Natural killer cell (primary cell): ENCODE measurements at regions of chr12 and their contacts with region 1.

Region 1: GRCh38 chr12:88141770-88142609 is at the starts of genes CEP290 and TMTC3:
- DNase-seq: peak; percentile 82 to 98
- ATAC-seq: peak; percentile 95 to 99 (median 96)
- H3K4me3 ChIP-seq: peak within 1 kb of the TSS; percentile 67
- H3K4me3 Mint-ChIP-seq: peak within 1 kb of the TSS; percentile 98
- H3K27ac ChIP-seq: peak within 1 kb of the TSS; percentile 87
- H3K27ac Mint-ChIP-seq: peak within 1 kb of the TSS; percentile 90 to 91
- H3K4me1 ChIP-seq: peaks cover 11% of the 10 kb centered on the region
- H3K4me1 Mint-ChIP-seq: peaks cover 25 to 49% of the 10 kb centered on the region in 2 donors
- H3K27me3 ChIP-seq: no peaks in the 10 kb centered on the region
- H3K27me3 Mint-ChIP-seq: no peaks in the 10 kb centered on the region
- CTCF ChIP-seq: no peak
- total RNA-seq, gene CEP290: 14.3 to 23.6 (median 18.7) TPM
- total RNA-seq, gene TMTC3: 5.0 to 6.2 (median 5.3) TPM

Region 2: DNA sequence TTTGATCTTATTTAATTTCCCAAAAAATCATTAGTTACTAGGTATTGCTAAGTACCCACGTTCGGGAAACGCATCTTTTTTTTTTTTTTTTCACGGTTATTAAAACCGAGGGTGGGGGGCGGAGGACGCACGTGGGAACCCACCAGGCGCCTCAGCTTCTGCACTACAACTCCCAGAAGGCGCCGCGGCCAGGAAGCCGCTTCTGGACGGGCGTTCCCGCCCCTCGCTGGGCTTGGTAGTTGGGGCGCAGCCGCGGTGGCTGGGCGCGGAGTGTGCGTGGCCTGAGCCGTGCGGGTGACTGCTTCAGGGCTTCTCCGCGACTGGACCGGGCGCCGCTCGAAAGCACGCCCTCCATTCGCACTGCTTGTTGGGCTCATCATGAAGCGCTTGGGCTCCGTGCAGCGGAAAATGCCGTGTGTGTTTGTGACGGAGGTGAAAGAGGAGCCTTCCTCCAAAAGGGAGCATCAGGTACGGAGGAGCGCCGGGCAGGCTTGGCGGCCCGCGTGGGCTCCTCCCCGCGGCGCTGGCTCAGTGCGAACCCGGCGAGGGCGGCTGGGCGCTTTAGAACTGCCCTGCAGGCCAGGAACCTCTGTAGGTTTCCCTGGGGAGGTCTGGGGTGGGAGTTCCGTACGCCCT is 106.6 kb before region 1 on chr12:
- intact Hi-C with region 1: loop called (anchors 1 kb)
- DNase-seq: peak; percentile 76 to 90
- ATAC-seq: peak; percentile 98 to 99 (median 98)
- H3K4me3 ChIP-seq: peak overlapping the region; percentile 71
- H3K4me3 Mint-ChIP-seq: peak overlapping the region; percentile 97
- H3K27ac ChIP-seq: peak overlapping the region; percentile 50
- H3K27ac Mint-ChIP-seq: peak overlapping the region; percentile 86 to 93
- H3K4me1 ChIP-seq: no peaks in the 10 kb centered on the region
- H3K4me1 Mint-ChIP-seq: peaks cover 32 to 50% of the 10 kb centered on the region in 2 donors
- H3K27me3 ChIP-seq: no peaks in the 10 kb centered on the region
- H3K27me3 Mint-ChIP-seq: no peaks in the 10 kb centered on the region
- CTCF ChIP-seq: no peak

Region 3: DNA sequence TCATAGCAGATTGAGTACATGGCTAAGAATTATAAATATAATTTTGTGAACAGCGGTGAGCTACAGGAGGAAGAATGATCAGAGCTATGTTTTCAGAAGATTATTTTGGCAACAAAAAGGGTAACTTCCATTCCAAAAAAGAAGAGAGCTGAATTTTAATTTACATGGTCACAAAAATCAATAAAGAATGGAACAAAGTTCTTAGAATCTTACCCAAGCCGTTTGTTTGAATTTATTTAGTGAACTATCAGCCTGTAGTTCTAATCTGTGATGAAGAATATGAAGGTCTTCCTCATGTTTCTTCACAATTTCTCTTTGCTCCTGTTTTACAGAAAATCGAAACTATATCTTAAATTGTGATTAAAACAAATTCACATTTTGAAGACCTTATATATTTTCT is 58.4 kb before region 1 on chr12:
- intact Hi-C with region 1: no loop called
- DNase-seq: no peak
- ATAC-seq: no peak
- H3K4me3 ChIP-seq: no peak overlapping the region
- H3K4me3 Mint-ChIP-seq: no peak overlapping the region
- H3K27ac ChIP-seq: no peak overlapping the region
- H3K27ac Mint-ChIP-seq: no peak overlapping the region
- H3K4me1 ChIP-seq: no peaks in the 10 kb centered on the region
- H3K4me1 Mint-ChIP-seq: no peaks in the 10 kb centered on the region
- H3K27me3 ChIP-seq: no peaks in the 10 kb centered on the region
- H3K27me3 Mint-ChIP-seq: no peaks in the 10 kb centered on the region
- CTCF ChIP-seq: no peak

Region 4: GRCh38 chr12:88111074-88111652 is 30.8 kb before region 1 on chr12:
- intact Hi-C with region 1: no loop called
- DNase-seq: peak in 1 of 2 donors; percentile 56
- ATAC-seq: no peak
- H3K4me3 ChIP-seq: no peak overlapping the region
- H3K4me3 Mint-ChIP-seq: no peak overlapping the region
- H3K27ac ChIP-seq: no peak overlapping the region
- H3K27ac Mint-ChIP-seq: no peak overlapping the region
- H3K4me1 ChIP-seq: no peaks in the 10 kb centered on the region
- H3K4me1 Mint-ChIP-seq: no peaks in the 10 kb centered on the region
- H3K27me3 ChIP-seq: no peaks in the 10 kb centered on the region
- H3K27me3 Mint-ChIP-seq: no peaks in the 10 kb centered on the region
- CTCF ChIP-seq: no peak

Region 5: GRCh38 chr12:89524541-89525285 is 1382.7 kb after region 1 on chr12 and contains the start of gene GALNT4:
- intact Hi-C with region 1: loop called (anchors 5 kb)
- DNase-seq: peak; percentile 65 to 87
- ATAC-seq: peak; percentile 64 to 81 (median 75)
- H3K4me3 ChIP-seq: peak within 1 kb of the TSS; percentile 100
- H3K4me3 Mint-ChIP-seq: peak within 1 kb of the TSS; percentile 96
- H3K27ac ChIP-seq: peak within 1 kb of the TSS; percentile 96
- H3K27ac Mint-ChIP-seq: peak within 1 kb of the TSS; percentile 86 to 93
- H3K4me1 ChIP-seq: peaks cover 25% of the 10 kb centered on the region
- H3K4me1 Mint-ChIP-seq: peaks cover 45 to 46% of the 10 kb centered on the region in 2 donors
- H3K27me3 ChIP-seq: no peaks in the 10 kb centered on the region
- H3K27me3 Mint-ChIP-seq: no peaks in the 10 kb centered on the region
- CTCF ChIP-seq: peak; percentile 57
- total RNA-seq, gene GALNT4: 14.3 to 19.9 (median 18.7) TPM